PC-9 (cell line): ENCODE measurements at regions of chr3 and their contacts with region 1.

Region 1: GRCh38 chr3:38136777-38137614 is at the start of gene ACAA1:
- DNase-seq: peak; percentile 96 to 99
- H3K4me3 ChIP-seq: peak within 1 kb of the TSS; percentile 98
- H3K27ac ChIP-seq: peak within 1 kb of the TSS; percentile 69
- H3K4me1 ChIP-seq: peaks cover 71% of the 10 kb centered on the region
- H3K27me3 ChIP-seq: no peaks in the 10 kb centered on the region
- CTCF ChIP-seq: no peak
- total RNA-seq, gene ACAA1: 58.9 and 65.8 TPM in 2 replicates

Region 2: DNA sequence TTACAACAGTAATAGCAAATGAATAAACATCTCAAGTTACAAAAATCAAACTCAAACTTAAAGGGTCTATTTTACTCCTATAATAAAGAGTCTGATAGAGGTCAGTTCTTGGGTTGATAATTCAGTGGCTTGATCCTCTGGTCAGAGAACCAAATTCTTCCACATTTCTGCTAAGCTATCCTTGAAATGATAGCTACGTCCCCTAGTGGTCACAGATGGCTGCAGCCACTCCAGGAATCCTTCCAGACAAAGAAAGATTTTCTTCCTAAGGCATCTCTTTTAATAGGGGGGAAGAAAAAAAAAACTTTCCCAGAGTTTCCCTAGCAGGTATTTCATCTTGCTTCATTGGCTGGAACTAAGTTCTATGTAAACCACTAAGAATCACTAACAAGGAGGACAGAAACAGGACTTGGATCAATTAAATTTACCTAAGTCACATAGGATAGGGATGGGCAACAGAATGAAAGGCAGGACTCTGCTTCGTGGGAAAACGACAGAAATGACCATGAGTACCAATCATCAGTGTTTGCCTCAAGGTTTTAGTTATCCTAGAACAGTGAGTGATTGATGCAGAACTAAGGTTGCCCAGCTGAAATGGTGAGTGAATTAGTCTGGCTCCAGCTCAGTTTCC is 1596.0 kb before region 1 on chr3:
- CTCF ChIA-PET with region 1: no interaction called
- POLR2A ChIA-PET with region 1: no interaction called
- intact Hi-C with region 1: no loop called
- DNase-seq: peak in 1 of 2 experiments; percentile 20
- H3K4me3 ChIP-seq: no peak overlapping the region
- H3K27ac ChIP-seq: no peak overlapping the region
- H3K4me1 ChIP-seq: no peaks in the 10 kb centered on the region
- H3K27me3 ChIP-seq: no peaks in the 10 kb centered on the region
- CTCF ChIP-seq: peak; percentile 86

Region 3: GRCh38 chr3:36993326-36994283 is 1143.4 kb before region 1 on chr3 and contains the start of gene MLH1:
- CTCF ChIA-PET with region 1: no interaction called
- POLR2A ChIA-PET with region 1: no interaction called
- intact Hi-C with region 1: loop called (anchors 5 kb)
- DNase-seq: peak in 1 of 2 experiments; percentile 99
- H3K4me3 ChIP-seq: peak within 1 kb of the TSS; percentile 83
- H3K27ac ChIP-seq: peak within 1 kb of the TSS; percentile 79
- H3K4me1 ChIP-seq: peaks cover 28% of the 10 kb centered on the region
- H3K27me3 ChIP-seq: no peaks in the 10 kb centered on the region
- CTCF ChIP-seq: no peak
- total RNA-seq, gene MLH1: 30.9 and 35.2 TPM in 2 replicates

Region 4: DNA sequence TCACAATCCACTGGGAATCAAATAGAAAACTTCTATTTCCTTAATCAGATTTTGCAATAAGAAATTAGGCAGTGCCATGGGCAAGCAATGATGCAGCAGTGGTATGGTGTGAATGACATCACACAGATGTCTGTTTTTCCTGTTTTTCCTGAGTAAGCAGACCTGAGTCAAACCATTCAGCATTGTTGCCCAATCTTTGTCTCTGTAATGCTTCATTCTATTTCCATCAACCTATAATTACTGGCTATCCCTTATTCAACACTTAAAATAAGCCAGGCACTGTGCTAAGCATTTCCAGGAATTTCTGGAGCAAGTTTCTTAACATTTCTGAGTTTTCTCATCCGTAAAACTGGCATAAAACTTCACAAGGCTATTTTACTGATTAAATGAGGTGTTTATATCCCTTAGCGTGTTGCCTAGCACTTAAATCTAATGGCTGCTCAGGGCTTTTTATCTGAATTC is 17.1 kb after region 1 on chr3:
- CTCF ChIA-PET with region 1: interaction called, 3 read pairs
- POLR2A ChIA-PET with region 1: interaction called, 6 read pairs
- intact Hi-C with region 1: loop called (anchors 1 kb)
- DNase-seq: peak; percentile 42 to 97
- H3K4me3 ChIP-seq: peak overlapping the region; percentile 3; the same call in 1 of the 2 replicates
- H3K27ac ChIP-seq: peak overlapping the region; percentile 92
- H3K4me1 ChIP-seq: peaks cover 73% of the 10 kb centered on the region
- H3K27me3 ChIP-seq: no peaks in the 10 kb centered on the region
- CTCF ChIP-seq: no peak

Region 5: DNA sequence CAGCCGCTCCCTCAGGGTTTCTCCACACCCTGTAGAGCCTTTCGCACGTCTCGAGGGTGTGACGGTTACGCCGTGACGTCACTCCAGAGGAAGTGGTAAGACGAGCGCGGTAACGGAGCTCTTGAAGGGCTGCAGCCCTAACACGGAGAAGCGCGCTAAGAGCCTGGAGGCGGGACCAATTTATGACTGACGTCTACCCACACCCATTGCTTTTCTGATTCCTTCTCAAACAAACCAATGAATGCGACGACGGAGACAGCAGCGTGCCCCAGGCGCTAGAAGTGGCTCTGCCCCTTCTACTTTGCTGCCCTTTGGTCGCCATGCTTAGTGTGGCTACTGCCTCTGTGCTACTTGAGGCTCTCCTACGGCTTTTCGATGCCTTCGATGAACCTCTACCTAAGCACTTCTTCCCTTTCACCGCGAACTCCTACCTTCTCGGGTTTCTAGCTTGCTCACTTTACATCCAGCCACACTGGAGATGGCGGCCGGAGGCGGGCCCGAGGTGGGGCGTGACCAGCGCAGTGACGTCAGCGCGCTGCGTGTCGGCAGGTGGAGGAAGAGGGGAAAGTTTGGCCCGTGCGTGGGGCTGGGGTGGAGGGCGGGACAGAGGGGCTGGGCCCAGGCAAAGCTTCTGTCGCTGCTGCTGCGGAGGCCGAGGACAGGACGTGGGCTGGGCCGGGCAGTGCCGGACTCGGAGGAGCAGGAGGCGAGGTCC is 28.1 kb after region 1 on chr3 and contains the start of gene OXSR1:
- CTCF ChIA-PET with region 1: interaction called, 5 read pairs
- POLR2A ChIA-PET with region 1: interaction called, 17 read pairs
- intact Hi-C with region 1: loop called (anchors 1 kb)
- DNase-seq: peak; percentile 99
- H3K4me3 ChIP-seq: peak within 1 kb of the TSS; percentile 74
- H3K27ac ChIP-seq: peak within 1 kb of the TSS; percentile 96
- H3K4me1 ChIP-seq: peaks cover 38% of the 10 kb centered on the region
- H3K27me3 ChIP-seq: no peaks in the 10 kb centered on the region
- CTCF ChIP-seq: no peak
- total RNA-seq, gene OXSR1: 50.2 and 54.3 TPM in 2 replicates

Region 6: DNA sequence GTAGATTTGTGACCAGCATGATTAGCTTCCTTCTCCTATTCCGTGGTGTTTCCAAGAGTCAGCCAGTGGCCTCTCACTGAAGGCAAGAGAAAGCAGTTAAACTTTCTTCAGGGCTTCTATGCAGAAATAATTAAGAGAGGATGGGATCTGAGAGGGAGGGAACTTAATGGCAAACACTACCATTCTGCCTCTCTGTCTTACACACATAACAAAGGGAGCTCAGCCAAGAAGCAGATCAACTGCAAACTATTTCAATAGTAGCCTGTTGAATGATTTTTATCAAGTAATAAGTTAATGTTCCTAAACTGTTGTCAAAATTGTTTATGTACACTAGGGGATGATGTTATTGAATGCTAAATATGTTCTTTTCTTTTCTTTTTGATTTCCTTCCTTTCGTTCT is 40.2 kb after region 1 on chr3:
- CTCF ChIA-PET with region 1: no interaction called
- POLR2A ChIA-PET with region 1: no interaction called
- intact Hi-C with region 1: no loop called
- DNase-seq: no peak
- H3K4me3 ChIP-seq: no peak overlapping the region
- H3K27ac ChIP-seq: no peak overlapping the region
- H3K4me1 ChIP-seq: peaks cover 12% of the 10 kb centered on the region
- H3K27me3 ChIP-seq: no peaks in the 10 kb centered on the region
- CTCF ChIP-seq: no peak

Region 7: GRCh38 chr3:38247366-38248035 is 110.5 kb after region 1 on chr3:
- CTCF ChIA-PET with region 1: interaction called, 3 read pairs
- POLR2A ChIA-PET with region 1: no interaction called
- intact Hi-C with region 1: loop called (anchors 5 kb)
- DNase-seq: peak; percentile 25 to 70
- H3K4me3 ChIP-seq: no peak overlapping the region
- H3K27ac ChIP-seq: peak overlapping the region; percentile 17; the same call in 1 of the 2 replicates
- H3K4me1 ChIP-seq: 0 out of 2 replicates have a peak, but pooled peaks cover 3% of the 10 kb centered on the region
- H3K27me3 ChIP-seq: no peaks in the 10 kb centered on the region
- CTCF ChIP-seq: no peak; the same call in 1 of the 2 replicates

Region 8: GRCh38 chr3:38453075-38453912 is 316.3 kb after region 1 on chr3 and contains the start of gene ACVR2B:
- CTCF ChIA-PET with region 1: no interaction called
- POLR2A ChIA-PET with region 1: no interaction called
- intact Hi-C with region 1: loop called (anchors 10 kb)
- DNase-seq: peak; percentile 65 to 77
- H3K4me3 ChIP-seq: peak within 1 kb of the TSS; percentile 89
- H3K27ac ChIP-seq: no peak within 1 kb of the TSS
- H3K4me1 ChIP-seq: peaks cover 13% of the 10 kb centered on the region
- H3K27me3 ChIP-seq: no peaks in the 10 kb centered on the region
- CTCF ChIP-seq: no peak
- total RNA-seq, gene ACVR2B: 11.0 and 12.4 TPM in 2 replicates